ENCODE measurements at regions of chr7 and their contacts with region 1.

Region 1: DNA sequence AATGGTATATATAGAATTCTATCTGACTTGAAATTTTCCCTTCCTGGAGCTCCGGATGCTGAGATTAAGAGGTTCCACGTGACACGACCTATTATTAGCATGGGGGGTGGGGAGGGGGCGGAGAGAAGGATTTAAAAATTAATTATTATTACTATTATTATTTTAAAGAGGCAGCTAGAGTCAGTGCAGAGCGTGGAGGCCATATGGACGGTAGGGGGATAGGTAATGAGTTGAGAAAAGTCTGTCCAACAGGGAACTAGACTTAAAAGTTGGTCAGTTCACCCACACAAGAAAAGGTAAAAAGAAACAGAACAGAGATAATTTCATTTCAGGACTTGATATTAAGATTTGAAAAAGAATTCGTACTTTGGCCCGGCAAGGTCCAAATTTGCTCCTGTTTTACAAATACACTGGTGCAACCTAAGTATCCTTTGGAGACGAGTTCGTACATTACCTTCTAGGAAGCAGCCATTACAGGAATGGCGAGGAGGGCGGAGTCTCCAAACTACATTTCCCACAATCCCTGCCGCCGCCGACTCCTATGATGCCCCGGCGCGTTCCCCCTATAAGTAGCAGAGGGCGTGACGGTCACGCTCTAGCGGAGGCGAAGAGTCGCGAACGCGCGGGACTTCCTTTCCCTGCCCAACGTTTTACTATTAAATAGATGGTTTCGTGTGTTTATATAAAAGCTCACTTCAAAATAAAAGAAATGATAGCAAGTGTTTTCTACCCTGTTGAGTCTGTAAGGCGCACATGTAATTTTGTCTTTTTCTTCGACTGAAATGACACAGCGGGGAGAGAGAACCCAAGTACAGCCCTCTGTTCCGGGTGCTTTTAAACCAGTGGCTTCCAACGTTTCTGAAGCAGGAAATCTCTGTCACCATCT is at the start of gene SMIM30:
- DNase-seq: peak; percentile 64
- H3K4me3 ChIP-seq: peak within 1 kb of the TSS; percentile 74
- H3K27ac ChIP-seq: no peak within 1 kb of the TSS
- H3K27me3 ChIP-seq: no peaks in the 10 kb centered on the region
- CTCF ChIP-seq: no peak
- polyA plus RNA-seq, gene SMIM30: 65.2 and 82.8 TPM in 2 replicates

Region 2: GRCh38 chr7:113093561-113093960 is 24.8 kb before region 1 on chr7:
- CTCF ChIA-PET with region 1: interaction called, 13 read pairs
- POLR2A ChIA-PET with region 1: no interaction called
- DNase-seq: no peak
- H3K4me3 ChIP-seq: no peak overlapping the region
- H3K27ac ChIP-seq: no peak overlapping the region
- H3K27me3 ChIP-seq: no peaks in the 10 kb centered on the region
- CTCF ChIP-seq: no peak

Measured in AG04450 (cell line).